PC-3 (cell line): ENCODE measurements at regions of chr5 and their contacts with region 1.

Region 1: DNA sequence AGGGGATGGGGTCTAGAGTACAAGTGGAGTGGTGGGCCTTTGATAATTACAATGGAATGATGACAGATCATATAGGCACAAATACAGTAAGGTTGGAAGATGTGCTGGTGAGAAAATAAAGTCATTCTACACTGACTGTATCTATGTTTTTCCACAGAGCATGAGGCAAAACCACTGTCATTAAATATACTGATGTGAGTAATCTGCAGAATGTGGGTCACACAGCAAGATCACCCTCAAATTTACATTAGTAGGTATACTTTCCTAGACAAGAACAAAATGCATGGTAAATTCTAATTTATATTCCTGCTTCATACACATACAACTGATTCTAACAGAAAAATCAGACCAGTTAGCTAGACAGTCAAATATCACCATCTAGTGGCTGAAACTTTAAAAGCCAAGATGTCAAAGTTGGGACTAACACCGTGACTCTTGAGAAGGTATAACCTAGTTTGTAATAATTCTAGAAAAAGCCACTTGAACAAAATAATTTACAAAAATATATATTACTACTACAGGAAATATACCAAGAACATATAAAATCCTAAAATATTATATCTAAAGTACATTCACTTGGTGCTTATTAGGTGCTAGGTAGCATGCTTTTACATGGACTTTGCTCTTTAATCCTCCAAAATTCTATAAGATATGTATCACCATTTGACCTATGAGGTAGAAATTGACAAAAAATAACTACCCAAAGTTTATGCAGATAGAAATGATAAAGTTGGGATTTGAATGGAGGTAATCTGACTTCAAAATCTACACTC is 19.5 kb downstream of the TTC33 start:
- DNase-seq: peak; percentile 95
- ATAC-seq: peak; percentile 61
- H3K4me3 ChIP-seq: no peak overlapping the region
- H3K27ac ChIP-seq: no peak overlapping the region
- H3K4me1 ChIP-seq: peaks cover 16% of the 10 kb centered on the region
- H3K27me3 ChIP-seq: no peaks in the 10 kb centered on the region
- CTCF ChIP-seq: peak; percentile 94

Region 2: GRCh38 chr5:39648532-39649213 is 1087.6 kb before region 1 on chr5:
- CTCF ChIA-PET with region 1: no interaction called
- POLR2A ChIA-PET with region 1: no interaction called
- intact Hi-C with region 1: loop called (anchors 2 kb)
- DNase-seq: peak; percentile 93
- ATAC-seq: peak; percentile 97
- H3K4me3 ChIP-seq: no peak overlapping the region
- H3K27ac ChIP-seq: peak overlapping the region; percentile 62
- H3K4me1 ChIP-seq: peaks cover 30% of the 10 kb centered on the region
- H3K27me3 ChIP-seq: no peaks in the 10 kb centered on the region
- CTCF ChIP-seq: peak; percentile 83

Region 3: DNA sequence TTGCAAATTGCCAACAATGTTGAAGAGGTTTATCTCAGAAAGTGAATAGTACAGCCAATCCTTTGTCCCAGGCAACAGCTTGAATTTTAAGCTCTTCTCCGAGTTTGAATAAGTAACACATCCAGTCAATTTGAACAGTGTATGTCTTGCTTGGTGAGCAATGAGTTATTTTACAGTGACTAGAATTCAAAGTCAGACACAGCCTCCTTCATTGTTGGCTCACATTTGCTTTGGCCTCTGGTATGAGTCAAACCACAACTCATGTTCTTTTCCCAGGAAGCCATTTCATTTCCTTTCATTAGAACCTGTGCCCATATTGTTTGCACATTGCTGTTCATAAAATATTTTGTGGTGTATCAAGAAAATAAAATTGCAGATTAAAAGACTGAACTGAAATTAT is 689.5 kb before region 1 on chr5:
- CTCF ChIA-PET with region 1: no interaction called
- POLR2A ChIA-PET with region 1: no interaction called
- intact Hi-C with region 1: loop called (anchors 5 kb)
- DNase-seq: peak; percentile 93
- ATAC-seq: peak; percentile 92
- H3K4me3 ChIP-seq: 0 out of 2 replicates have a peak overlapping the region, but pooled peaks have one; percentile 2
- H3K27ac ChIP-seq: peak overlapping the region; percentile 93
- H3K4me1 ChIP-seq: peaks cover 30% of the 10 kb centered on the region
- H3K27me3 ChIP-seq: no peaks in the 10 kb centered on the region
- CTCF ChIP-seq: no peak

Region 4: DNA sequence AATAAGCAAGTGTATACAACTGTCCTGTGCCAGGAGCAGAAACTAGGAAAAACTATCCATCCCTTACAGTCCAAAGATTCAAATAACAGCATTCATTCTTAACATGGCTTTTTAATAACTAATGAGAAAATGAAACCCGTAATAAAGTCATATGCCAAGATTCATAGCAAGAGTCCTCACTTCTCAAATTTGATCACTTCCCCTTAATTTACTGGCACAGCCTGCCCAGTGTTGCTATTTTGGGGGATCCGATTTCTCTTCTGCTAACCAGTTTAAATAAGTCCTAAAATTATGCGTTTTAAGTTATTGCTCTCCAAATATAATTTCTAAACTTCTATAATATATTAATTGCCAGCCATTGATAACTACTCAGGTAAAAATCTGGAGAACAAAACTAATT is 233.6 kb before region 1 on chr5:
- CTCF ChIA-PET with region 1: no interaction called
- POLR2A ChIA-PET with region 1: no interaction called
- intact Hi-C with region 1: loop called (anchors 1 kb)
- DNase-seq: no peak
- ATAC-seq: no peak
- H3K4me3 ChIP-seq: no peak overlapping the region
- H3K27ac ChIP-seq: peak overlapping the region; percentile 75
- H3K4me1 ChIP-seq: peaks cover 23% of the 10 kb centered on the region
- H3K27me3 ChIP-seq: no peaks in the 10 kb centered on the region
- CTCF ChIP-seq: no peak